ENCODE measurements at regions of chr9 and their contacts with region 1.

Region 1: GRCh38 chr9:122931226-122932121 is at the start of gene ZBTB26:
- DNase-seq: peak; percentile 91

Region 2: GRCh38 chr9:122857815-122858214 is 73.7 kb before region 1 on chr9:
- CTCF ChIA-PET with region 1: no interaction called
- POLR2A ChIA-PET with region 1: no interaction called
- DNase-seq: no peak

Region 3: DNA sequence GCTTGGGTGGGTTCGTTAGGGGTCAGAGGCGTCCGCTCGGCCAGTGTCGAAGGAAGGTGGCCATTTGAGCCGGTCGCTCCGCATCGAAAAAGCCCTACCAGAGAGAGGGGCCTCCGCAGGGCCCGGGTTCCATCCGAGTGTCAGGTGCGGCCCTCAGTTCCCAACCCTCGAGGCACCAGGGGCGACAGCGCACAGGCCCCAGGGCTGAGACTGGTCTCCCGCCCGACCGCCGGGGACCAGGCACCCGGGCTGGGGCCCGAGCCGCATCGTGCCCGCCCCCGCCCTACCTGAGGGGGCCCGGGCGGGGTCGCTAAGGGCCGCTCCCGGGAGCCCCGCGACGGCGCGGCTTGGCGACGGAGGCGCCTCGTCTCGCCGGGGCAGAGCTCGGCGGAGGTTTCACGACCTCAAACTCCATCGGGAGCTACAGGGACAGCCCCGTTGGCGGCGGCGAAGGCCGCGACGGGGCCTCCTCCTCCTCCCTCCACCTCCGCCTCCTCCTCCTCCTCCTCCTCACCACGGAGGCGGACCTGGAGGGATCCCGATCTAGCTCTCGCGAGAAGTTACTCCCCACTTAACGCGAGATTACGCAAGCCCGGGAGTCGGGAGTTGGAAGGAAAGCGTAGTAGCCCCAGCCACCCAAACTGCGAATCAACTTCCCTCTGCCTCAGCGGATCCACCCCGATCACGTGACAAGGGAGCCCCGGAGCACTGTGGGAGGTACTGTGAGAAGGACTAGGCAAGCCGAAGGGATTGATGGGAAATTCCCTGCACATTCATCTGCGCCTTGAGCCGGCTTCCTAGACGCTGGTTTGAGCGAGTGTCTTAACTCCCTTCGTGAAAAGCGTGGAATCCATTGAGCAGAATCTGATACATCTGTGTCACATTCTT is 26.4 kb before region 1 on chr9 and contains the start of gene RC3H2:
- CTCF ChIA-PET with region 1: no interaction called
- POLR2A ChIA-PET with region 1: interaction called, 21 read pairs
- DNase-seq: peak; percentile 96

Region 4: DNA sequence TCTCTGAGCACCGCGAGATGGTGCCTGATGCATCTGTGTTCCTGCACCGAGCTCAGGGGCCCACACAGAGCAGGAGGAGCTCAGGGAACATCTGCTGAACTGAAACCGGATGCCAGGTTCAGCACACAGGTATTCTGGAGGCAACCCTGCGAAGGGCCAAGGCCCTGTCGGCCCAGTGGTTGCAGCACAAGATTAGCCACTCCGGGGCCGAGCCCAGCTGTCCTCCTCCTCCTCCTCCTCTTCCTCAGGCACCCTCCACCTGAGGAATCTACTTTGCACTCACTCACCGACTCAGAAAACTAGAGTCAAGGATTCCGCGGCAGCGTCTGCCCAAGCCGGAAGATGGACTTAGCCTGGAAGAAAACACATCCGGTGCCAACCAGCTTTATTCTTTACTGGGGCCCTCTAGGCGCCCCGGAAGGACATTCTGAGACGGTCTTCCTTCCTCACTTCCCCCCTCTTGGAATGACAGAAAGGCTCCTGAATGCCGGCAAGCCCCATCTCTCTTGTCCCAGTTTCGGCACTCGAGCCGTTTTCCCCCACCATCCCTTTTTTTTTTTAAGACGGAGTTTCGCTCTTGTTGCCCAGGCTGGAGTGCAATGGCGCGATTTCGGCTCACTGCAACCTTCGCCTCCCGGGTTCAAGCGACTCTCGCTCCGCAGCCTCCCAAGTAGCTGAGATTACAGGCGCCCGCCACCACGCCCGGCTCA is 18.4 kb before region 1 on chr9 and contains the start of gene ZBTB6:
- CTCF ChIA-PET with region 1: interaction called, 4 read pairs
- POLR2A ChIA-PET with region 1: interaction called, 30 read pairs
- DNase-seq: peak; percentile 73

Region 5: GRCh38 chr9:122961139-122961538 is 29.7 kb after region 1 on chr9:
- CTCF ChIA-PET with region 1: no interaction called
- POLR2A ChIA-PET with region 1: no interaction called
- DNase-seq: no peak